ENCODE measurements at regions of chr15 and their contacts with region 1.

Region 1: DNA sequence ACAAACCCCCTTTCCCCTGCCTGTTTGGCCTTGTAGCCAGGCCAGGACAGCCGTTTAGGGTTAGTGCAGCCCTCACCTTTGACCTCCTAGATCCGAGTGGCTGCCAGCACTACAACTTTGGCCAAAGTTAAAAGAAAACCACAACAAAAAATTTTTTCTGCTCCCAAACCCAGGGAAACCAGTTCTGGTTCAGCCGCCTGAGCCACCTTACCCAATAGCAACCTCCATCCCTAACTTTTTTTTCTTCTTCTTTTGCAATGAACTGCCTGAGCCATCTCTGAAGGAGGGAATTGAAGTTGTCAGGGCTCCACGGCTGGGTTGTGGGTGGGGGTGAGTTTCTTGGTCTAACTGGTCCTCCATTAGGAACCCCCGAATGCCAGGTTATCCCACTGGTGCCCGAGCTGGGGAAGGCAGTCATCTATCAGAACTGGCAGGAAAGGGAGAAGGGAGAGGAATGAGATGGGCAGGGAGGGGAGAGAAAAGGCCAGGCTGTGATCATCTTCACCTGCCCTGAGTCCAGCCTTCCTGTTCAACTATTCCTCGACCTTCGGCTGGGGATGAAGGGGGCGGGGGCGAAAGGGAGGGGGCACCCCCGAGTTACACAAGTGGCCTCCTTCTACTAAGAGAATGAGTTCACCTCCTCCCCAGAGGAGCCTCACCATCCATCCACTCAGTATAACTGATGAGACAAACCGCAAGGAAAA is 6.2 kb upstream of the NR2F2 start:
- DNase-seq: no peak
- H3K4me3 ChIP-seq: peak overlapping the region; percentile 77
- H3K27ac ChIP-seq: peak overlapping the region; percentile 88
- H3K4me1 ChIP-seq: peaks cover 56% of the 10 kb centered on the region
- H3K27me3 ChIP-seq: no peaks in the 10 kb centered on the region
- CTCF ChIP-seq: no peak

Region 2: DNA sequence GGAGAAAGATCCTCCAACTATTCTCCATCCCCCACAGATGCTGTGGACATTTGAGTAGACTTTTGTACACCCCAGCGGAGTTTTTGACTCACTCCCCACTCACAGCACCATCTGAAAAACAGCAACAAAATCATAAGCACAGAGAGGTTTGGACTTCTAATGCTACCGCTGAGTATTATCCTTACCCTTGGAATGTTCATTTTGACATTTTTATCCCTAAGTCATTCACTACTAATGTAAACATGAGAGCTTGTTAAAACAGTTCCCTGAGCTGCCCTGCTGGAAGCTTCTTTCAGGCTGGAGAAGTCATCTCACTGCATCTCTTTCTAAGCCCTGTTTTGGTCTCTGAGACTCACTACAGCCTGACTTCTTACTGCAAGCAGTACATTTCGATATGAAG is 1047.1 kb before region 1 on chr15:
- CTCF ChIA-PET with region 1: interaction called, 10 read pairs
- POLR2A ChIA-PET with region 1: no interaction called
- intact Hi-C with region 1: no loop called
- DNase-seq: no peak
- H3K4me3 ChIP-seq: no peak overlapping the region
- H3K27ac ChIP-seq: no peak overlapping the region
- H3K4me1 ChIP-seq: no peaks in the 10 kb centered on the region
- H3K27me3 ChIP-seq: no peaks in the 10 kb centered on the region
- CTCF ChIP-seq: no peak

Measured in A673 (cell line).